Right ventricle myocardium inferior (tissue), 1 donor: ENCODE measurements at regions of chr11 and their contacts with region 1.

Region 1: DNA sequence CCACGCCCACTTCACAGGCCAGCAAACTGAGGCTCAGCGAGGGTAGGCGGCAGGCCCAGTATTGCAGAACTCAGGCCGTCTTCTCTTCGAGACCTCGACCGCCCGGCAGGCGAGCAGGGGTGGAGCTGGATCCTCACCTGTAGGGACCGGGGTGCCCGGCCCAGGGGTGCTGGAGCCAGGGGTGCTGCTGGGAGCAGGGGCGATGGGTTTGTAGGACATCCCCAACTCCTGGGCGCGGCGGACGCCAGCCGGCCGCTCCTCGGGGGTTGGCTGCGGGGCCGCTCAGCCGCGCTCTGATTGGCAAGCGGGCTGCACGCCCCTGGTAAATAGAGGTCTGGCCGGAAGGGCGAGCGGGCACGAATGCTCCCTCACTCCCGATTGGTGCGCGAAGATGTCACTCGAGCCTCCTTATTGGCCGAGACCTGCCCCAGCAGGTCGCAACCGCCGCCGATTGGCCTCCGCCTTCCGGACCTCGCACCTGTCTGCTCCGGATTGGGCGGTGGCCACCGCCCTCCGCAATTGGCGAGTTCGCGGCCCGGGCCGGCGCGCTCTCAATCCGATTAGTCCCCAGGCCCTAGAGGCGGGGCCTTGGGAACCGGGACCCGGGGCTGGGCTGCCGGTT is at the start of gene CDK2AP2:
- DNase-seq: peak; percentile 100
- ATAC-seq: peak; percentile 88
- total RNA-seq, gene CDK2AP2: 67.3 TPM

Region 2: DNA sequence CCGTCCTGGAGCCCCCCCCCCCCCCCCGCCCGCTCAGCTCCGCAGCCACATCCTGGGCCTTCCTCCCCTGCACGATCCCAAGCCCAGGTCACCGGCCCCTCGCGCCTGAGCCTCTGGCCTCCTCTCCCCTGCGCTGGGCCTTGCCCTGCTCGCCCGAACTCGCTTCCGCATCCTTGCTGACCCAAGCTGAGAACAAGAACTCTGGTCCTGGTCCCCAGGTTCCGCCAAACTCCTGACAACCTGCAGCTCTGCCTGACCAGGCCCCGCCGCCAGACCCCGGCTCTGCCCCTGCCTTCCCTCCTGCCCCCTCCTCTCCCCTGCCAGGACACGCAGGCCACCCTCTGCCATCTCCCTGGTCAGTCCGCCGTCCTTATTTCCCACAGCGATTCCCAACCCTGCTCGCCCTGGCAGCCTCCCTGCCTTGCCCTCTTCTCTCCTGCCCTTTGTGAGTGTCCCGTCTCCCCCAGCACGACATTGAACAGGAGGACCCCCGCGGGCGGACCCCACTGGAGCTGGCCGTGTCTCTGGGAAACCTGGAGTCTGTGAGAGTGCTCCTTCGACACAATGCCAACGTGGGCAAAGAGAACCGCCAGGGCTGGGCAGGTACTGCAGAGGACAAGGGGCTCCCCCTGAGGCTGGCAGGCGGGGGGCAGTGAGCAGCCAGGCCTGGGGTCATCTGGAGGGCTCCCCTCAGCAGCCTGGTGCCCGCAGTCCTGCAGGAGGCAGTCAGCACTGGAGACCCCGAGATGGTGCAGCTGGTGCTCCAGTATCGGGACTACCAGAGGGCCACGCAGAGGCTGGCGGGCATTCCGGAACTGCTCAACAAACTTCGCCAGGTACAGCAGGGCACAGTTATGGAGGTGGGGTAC is 218.1 kb before region 1 on chr11:
- intact Hi-C with region 1: no loop called
- DNase-seq: peak; percentile 81
- ATAC-seq: peak; percentile 0

Region 3: GRCh38 chr11:67353317-67354074 is 154.5 kb before region 1 on chr11 and contains the start of gene POLD4:
- intact Hi-C with region 1: loop called (anchors 5 kb)
- DNase-seq: peak; percentile 100
- ATAC-seq: peak; percentile 95
- total RNA-seq, gene POLD4: 49.7 TPM

Region 4: GRCh38 chr11:67391304-67392132 is 116.5 kb before region 1 on chr11 and contains the start of gene RAD9A:
- intact Hi-C with region 1: loop called (anchors 2 kb)
- DNase-seq: peak; percentile 99
- ATAC-seq: peak; percentile 89
- total RNA-seq, gene RAD9A: 6.9 TPM

Region 5: GRCh38 chr11:67468835-67469811 is 38.9 kb before region 1 on chr11 and contains the start of gene TMEM134:
- intact Hi-C with region 1: loop called (anchors 1 kb)
- DNase-seq: peak; percentile 97
- ATAC-seq: peak; percentile 95
- total RNA-seq, gene TMEM134: 85.3 TPM

Region 6: GRCh38 chr11:67482825-67483798 is 24.9 kb before region 1 on chr11 and contains the start of gene AIP:
- intact Hi-C with region 1: loop called (anchors 2 kb)
- DNase-seq: peak; percentile 97
- ATAC-seq: peak; percentile 98
- total RNA-seq, gene AIP: 57.4 TPM

Region 7: GRCh38 chr11:67572747-67573419 is 64.9 kb after region 1 on chr11:
- intact Hi-C with region 1: no loop called
- DNase-seq: no peak
- ATAC-seq: no peak

Region 8: GRCh38 chr11:67606492-67607201 is 98.7 kb after region 1 on chr11 and contains the start of gene NDUFV1:
- intact Hi-C with region 1: loop called (anchors 5 kb)
- DNase-seq: peak; percentile 99
- ATAC-seq: peak; percentile 99
- total RNA-seq, gene NDUFV1: 724 TPM